ENCODE measurements at regions of chr2 and their contacts with region 1.

Region 1: GRCh38 chr2:11129598-11130449 is 25.4 kb upstream of the SLC66A3 start:
- DNase-seq: peak; percentile 73 to 88 (median 79)
- H3K4me3 ChIP-seq: peak overlapping the region; percentile 49
- H3K4me3 Mint-ChIP-seq: peak overlapping the region; percentile 79 to 93 (median 82)
- H3K27ac ChIP-seq: no peak overlapping the region
- H3K27ac Mint-ChIP-seq: peak overlapping the region; percentile 78 to 92 (median 89)
- H3K4me1 ChIP-seq: peaks cover 22% of the 10 kb centered on the region
- H3K4me1 Mint-ChIP-seq: peaks cover 25 to 52% (median 40%) of the 10 kb centered on the region in 3 donors
- H3K27me3 ChIP-seq: no peaks in the 10 kb centered on the region
- H3K27me3 Mint-ChIP-seq: peaks cover 0 to 2% of the 10 kb centered on the region in 2 donors

Region 2: DNA sequence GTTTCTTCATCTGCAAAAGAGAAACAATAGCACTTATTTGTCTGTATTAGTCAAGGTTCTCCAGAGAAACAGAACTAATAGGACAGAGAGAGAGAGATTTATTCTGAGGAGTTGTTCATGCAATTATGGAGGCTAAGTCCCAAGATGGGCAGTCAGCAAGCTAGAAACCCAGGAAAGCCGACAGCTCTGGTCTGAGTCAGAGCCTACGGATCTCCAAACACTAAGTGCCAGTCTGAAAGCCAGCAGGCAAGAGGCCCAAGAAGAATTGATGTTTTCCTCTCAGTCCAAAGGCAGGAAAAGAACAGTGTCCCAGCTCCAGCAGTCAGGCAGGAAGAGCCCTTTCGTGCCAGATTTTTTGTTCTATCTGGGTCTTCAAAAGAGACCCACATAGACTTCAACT is 11.1 kb before region 1 on chr2:
- CTCF ChIA-PET with region 1: interaction called, 16 read pairs
- POLR2A ChIA-PET with region 1: no interaction called
- DNase-seq: no peak
- H3K4me3 ChIP-seq: no peak overlapping the region
- H3K4me3 Mint-ChIP-seq: no peak overlapping the region
- H3K27ac ChIP-seq: no peak overlapping the region
- H3K27ac Mint-ChIP-seq: no peak overlapping the region
- H3K4me1 ChIP-seq: no peaks in the 10 kb centered on the region
- H3K4me1 Mint-ChIP-seq: peaks cover 0 to 1% (median 0%) of the 10 kb centered on the region in 3 donors
- H3K27me3 ChIP-seq: no peaks in the 10 kb centered on the region
- H3K27me3 Mint-ChIP-seq: peaks cover 0 to 4% of the 10 kb centered on the region in 2 donors

Region 3: DNA sequence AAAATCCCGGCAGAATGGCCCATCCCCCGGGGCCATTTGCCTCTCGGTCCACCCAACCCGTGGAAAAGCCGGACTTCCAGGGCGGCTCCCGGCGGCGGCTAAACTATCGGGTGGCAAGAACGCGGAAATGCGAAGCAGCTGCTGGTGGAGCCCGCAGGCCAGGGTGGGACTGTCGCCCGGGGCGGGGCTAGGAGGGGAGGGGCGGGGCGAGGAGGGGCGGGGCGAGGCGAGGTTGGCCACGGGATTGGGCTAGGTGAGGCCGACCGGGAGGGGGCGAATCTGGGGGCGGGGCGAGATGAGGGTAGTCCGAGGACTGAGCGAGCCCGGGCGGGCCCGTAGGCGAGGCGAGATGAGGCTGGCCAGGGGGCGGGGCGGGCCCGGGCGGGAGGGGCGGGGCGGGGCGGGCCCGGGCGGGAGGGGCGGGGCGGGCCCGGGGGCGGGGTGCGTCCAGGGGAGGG is 25.1 kb after region 1 on chr2:
- CTCF ChIA-PET with region 1: interaction called, 30 read pairs
- POLR2A ChIA-PET with region 1: interaction called, 13 read pairs
- DNase-seq: peak; percentile 94 to 99 (median 97)
- H3K4me3 ChIP-seq: peak overlapping the region; percentile 64
- H3K4me3 Mint-ChIP-seq: peak overlapping the region; percentile 75 to 91 (median 82)
- H3K27ac ChIP-seq: peak overlapping the region; percentile 75
- H3K27ac Mint-ChIP-seq: peak overlapping the region; percentile 56 to 90 (median 84)
- H3K4me1 ChIP-seq: peaks cover 21% of the 10 kb centered on the region
- H3K4me1 Mint-ChIP-seq: peaks cover 14 to 27% (median 22%) of the 10 kb centered on the region in 3 donors
- H3K27me3 ChIP-seq: no peaks in the 10 kb centered on the region
- H3K27me3 Mint-ChIP-seq: no peaks in the 10 kb centered on the region

Region 4: GRCh38 chr2:11411768-11412448 is 282.1 kb after region 1 on chr2:
- CTCF ChIA-PET with region 1: interaction called, 26 read pairs
- POLR2A ChIA-PET with region 1: no interaction called
- DNase-seq: no peak
- H3K4me3 ChIP-seq: no peak overlapping the region
- H3K4me3 Mint-ChIP-seq: peak overlapping the region in 2 of 7 donors; percentile 20 to 30
- H3K27ac ChIP-seq: no peak overlapping the region
- H3K27ac Mint-ChIP-seq: no peak overlapping the region
- H3K4me1 ChIP-seq: no peaks in the 10 kb centered on the region
- H3K4me1 Mint-ChIP-seq: peaks cover 0 to 4% (median 0%) of the 10 kb centered on the region in 3 donors
- H3K27me3 ChIP-seq: no peaks in the 10 kb centered on the region
- H3K27me3 Mint-ChIP-seq: peaks cover 23 to 61% of the 10 kb centered on the region in 2 donors

Region 5: GRCh38 chr2:11465497-11466406 is 335.9 kb after region 1 on chr2 and contains the start of gene E2F6:
- CTCF ChIA-PET with region 1: interaction called, 16 read pairs
- POLR2A ChIA-PET with region 1: no interaction called
- DNase-seq: peak; percentile 80 to 88 (median 85)
- H3K4me3 ChIP-seq: peak within 1 kb of the TSS; percentile 88
- H3K4me3 Mint-ChIP-seq: peak within 1 kb of the TSS; percentile 86 to 98 (median 88)
- H3K27ac ChIP-seq: peak within 1 kb of the TSS; percentile 54
- H3K27ac Mint-ChIP-seq: peak within 1 kb of the TSS; percentile 72 to 97 (median 88)
- H3K4me1 ChIP-seq: peaks cover 16% of the 10 kb centered on the region
- H3K4me1 Mint-ChIP-seq: peaks cover 31 to 54% (median 49%) of the 10 kb centered on the region in 3 donors
- H3K27me3 ChIP-seq: no peaks in the 10 kb centered on the region
- H3K27me3 Mint-ChIP-seq: peaks cover 0 to 2% of the 10 kb centered on the region in 2 donors
- total RNA-seq, gene E2F6: 13.9 to 14.7 TPM

Measured in CD8-positive, alpha-beta memory T cell (primary cell).